MCF 10A (cell line): ENCODE measurements at regions of chr12 and their contacts with region 1.

Region 1: DNA sequence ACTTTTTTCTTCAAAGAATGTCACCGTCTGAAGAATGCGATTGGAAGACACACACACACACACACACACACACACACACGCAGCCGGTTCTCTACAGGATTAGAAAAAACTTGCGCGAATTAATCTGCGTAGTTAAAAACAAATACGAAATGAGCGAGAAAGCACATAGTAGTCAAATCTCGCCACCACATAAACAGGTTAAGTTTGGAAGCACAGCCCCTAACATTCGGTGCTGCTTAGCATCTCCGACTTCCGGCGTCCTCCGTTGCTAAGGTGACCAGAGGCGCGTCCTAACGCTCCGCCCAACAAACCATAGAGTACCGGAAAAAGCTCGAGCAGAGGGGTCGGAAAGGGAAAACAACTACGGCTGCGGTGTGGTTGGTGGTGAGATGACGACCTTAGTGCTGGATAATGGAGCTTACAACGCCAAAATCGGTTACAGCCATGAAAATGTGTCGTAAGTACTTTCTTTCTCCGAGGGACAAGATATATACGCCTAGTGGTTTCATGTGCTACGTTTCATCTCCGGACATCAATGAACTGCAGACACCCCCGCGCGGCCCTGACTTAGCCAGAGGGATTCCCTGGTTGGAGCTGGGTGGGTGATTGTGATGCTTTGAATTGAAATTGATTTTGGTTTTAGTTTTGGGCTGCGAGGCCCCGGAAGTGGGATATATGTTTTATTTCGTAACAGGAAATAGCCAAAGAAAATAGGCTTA is at the start of gene ACTR6:
- DNase-seq: peak; percentile 96
- H3K4me3 Mint-ChIP-seq: peak within 1 kb of the TSS; percentile 99
- H3K27ac Mint-ChIP-seq: peak within 1 kb of the TSS; percentile 93
- H3K4me1 Mint-ChIP-seq: peaks cover 10% of the 10 kb centered on the region
- H3K27me3 Mint-ChIP-seq: no peaks in the 10 kb centered on the region
- CTCF ChIP-seq: no peak
- total RNA-seq, gene ACTR6: 26.4 and 28.8 TPM in 2 replicates

Region 2: DNA sequence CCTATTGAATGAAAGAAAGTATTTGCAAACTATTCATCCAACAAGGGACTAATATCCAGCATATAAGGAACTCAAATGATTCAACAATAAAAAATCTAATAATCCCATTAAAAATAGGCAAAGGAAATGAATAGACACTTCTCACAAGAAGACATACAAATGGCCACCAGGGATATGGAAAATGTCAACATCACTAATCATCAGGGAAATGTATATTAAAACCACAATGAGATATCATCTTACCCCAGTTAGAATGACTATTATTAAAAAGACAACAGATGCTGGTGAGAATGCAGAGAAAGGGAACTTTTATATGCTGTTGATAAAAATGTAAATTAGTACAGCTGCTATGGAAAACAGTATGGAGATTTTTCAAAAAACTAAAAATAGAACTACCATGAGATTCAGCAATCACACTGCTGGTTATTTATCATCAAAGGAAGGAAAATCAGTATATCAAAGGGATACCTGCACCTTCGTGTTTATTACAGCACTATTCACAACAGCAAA is 463.8 kb before region 1 on chr12:
- CTCF ChIA-PET with region 1: no interaction called
- POLR2A ChIA-PET with region 1: no interaction called
- intact Hi-C with region 1: no loop called
- DNase-seq: no peak
- H3K4me3 Mint-ChIP-seq: no peak overlapping the region
- H3K27ac Mint-ChIP-seq: no peak overlapping the region
- H3K4me1 Mint-ChIP-seq: no peaks in the 10 kb centered on the region
- H3K27me3 Mint-ChIP-seq: no peaks in the 10 kb centered on the region
- CTCF ChIP-seq: no peak

Region 3: GRCh38 chr12:100128512-100128908 is 72.1 kb before region 1 on chr12:
- CTCF ChIA-PET with region 1: no interaction called
- POLR2A ChIA-PET with region 1: interaction called, 5 read pairs
- intact Hi-C with region 1: loop called (anchors 5 kb)
- DNase-seq: peak; percentile 77
- H3K4me3 Mint-ChIP-seq: peak overlapping the region; percentile 50
- H3K27ac Mint-ChIP-seq: peak overlapping the region; percentile 82
- H3K4me1 Mint-ChIP-seq: peaks cover 19% of the 10 kb centered on the region
- H3K27me3 Mint-ChIP-seq: no peaks in the 10 kb centered on the region
- CTCF ChIP-seq: peak; percentile 19

Region 4: GRCh38 chr12:100215209-100215608 is 14.6 kb after region 1 on chr12:
- CTCF ChIA-PET with region 1: interaction called, 4 read pairs
- POLR2A ChIA-PET with region 1: interaction called, 18 read pairs
- intact Hi-C with region 1: no loop called
- DNase-seq: peak; percentile 25
- H3K4me3 Mint-ChIP-seq: no peak overlapping the region
- H3K27ac Mint-ChIP-seq: peak overlapping the region; percentile 51
- H3K4me1 Mint-ChIP-seq: peaks cover 9% of the 10 kb centered on the region
- H3K27me3 Mint-ChIP-seq: no peaks in the 10 kb centered on the region
- CTCF ChIP-seq: no peak

Region 5: GRCh38 chr12:100447381-100447780 is 246.8 kb after region 1 on chr12:
- CTCF ChIA-PET with region 1: no interaction called
- POLR2A ChIA-PET with region 1: no interaction called
- intact Hi-C with region 1: no loop called
- DNase-seq: no peak
- H3K4me3 Mint-ChIP-seq: no peak overlapping the region
- H3K27ac Mint-ChIP-seq: no peak overlapping the region
- H3K4me1 Mint-ChIP-seq: no peaks in the 10 kb centered on the region
- H3K27me3 Mint-ChIP-seq: peaks cover 34% of the 10 kb centered on the region
- CTCF ChIP-seq: no peak